Pancreas (tissue), 10 donors: ENCODE measurements at regions of chr11 and their contacts with region 1.

Region 1: GRCh38 chr11:81135570-81135969 is 1598.1 kb downstream of the FAM181B start:
- DNase-seq: no peak
- ATAC-seq: no peak
- H3K4me3 ChIP-seq: no peak overlapping the region
- H3K27ac ChIP-seq: no peak overlapping the region
- H3K4me1 ChIP-seq: no peaks in the 10 kb centered on the region
- H3K27me3 ChIP-seq: no peaks in the 10 kb centered on the region
- CTCF ChIP-seq: no peak

Region 2: GRCh38 chr11:80758787-80759186 is 376.8 kb before region 1 on chr11:
- intact Hi-C with region 1: no loop called
- DNase-seq: no peak
- ATAC-seq: no peak
- H3K4me3 ChIP-seq: no peak overlapping the region
- H3K27ac ChIP-seq: no peak overlapping the region
- H3K4me1 ChIP-seq: no peaks in the 10 kb centered on the region
- H3K27me3 ChIP-seq: no peaks in the 10 kb centered on the region
- CTCF ChIP-seq: no peak

Region 3: GRCh38 chr11:80980221-80980620 is 155.3 kb before region 1 on chr11:
- intact Hi-C with region 1: no loop called
- DNase-seq: no peak
- ATAC-seq: no peak
- H3K4me3 ChIP-seq: no peak overlapping the region
- H3K27ac ChIP-seq: no peak overlapping the region
- H3K4me1 ChIP-seq: no peaks in the 10 kb centered on the region
- H3K27me3 ChIP-seq: no peaks in the 10 kb centered on the region
- CTCF ChIP-seq: no peak

Region 4: GRCh38 chr11:81080476-81080875 is 55.1 kb before region 1 on chr11:
- intact Hi-C with region 1: loop called in 1 of 3 experiments (anchors 10 kb)
- DNase-seq: no peak
- ATAC-seq: no peak
- H3K4me3 ChIP-seq: no peak overlapping the region
- H3K27ac ChIP-seq: no peak overlapping the region
- H3K4me1 ChIP-seq: no peaks in the 10 kb centered on the region
- H3K27me3 ChIP-seq: no peaks in the 10 kb centered on the region
- CTCF ChIP-seq: no peak

Region 5: DNA sequence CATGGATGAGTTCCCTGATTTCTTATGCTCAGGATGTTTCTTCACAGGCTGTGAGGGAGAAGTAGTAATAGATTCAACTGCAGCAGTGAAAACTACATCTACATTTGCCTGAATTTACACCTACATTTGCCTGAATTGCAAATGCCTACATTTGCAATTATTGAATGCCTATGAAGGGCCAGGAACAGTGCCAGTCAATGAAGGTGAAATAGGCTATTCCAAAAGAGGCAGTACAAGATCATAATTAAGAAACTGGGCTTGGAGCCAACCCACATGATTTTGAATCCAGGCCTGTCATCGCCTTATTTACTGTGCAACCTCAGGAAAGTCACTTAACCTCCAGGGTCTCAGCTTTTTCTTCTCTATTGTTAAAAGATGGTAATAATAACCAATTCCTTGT is 244.8 kb after region 1 on chr11:
- intact Hi-C with region 1: no loop called
- DNase-seq: no peak
- ATAC-seq: no peak
- H3K4me3 ChIP-seq: no peak overlapping the region
- H3K27ac ChIP-seq: no peak overlapping the region
- H3K4me1 ChIP-seq: no peaks in the 10 kb centered on the region
- H3K27me3 ChIP-seq: no peaks in the 10 kb centered on the region
- CTCF ChIP-seq: no peak